B cell (primary cell): ENCODE measurements at regions of chr19 and their contacts with region 1.

Region 1: GRCh38 chr19:9435279-9436268 is at the start of gene ZNF266:
- DNase-seq: peak; percentile 95
- ATAC-seq: peak; percentile 93
- H3K4me3 ChIP-seq: peak within 1 kb of the TSS; percentile 64 to 91 (median 80)
- H3K4me3 Mint-ChIP-seq: peak within 1 kb of the TSS; percentile 95
- H3K27ac ChIP-seq: peak within 1 kb of the TSS; percentile 92 to 93
- H3K27ac Mint-ChIP-seq: peak within 1 kb of the TSS; percentile 98
- H3K4me1 ChIP-seq: peaks cover 16 to 26% of the 10 kb centered on the region in 2 donors
- H3K4me1 Mint-ChIP-seq: peaks cover 35% of the 10 kb centered on the region
- H3K27me3 ChIP-seq: no peaks in the 10 kb centered on the region
- H3K27me3 Mint-ChIP-seq: no peaks in the 10 kb centered on the region
- CTCF ChIP-seq: peak; percentile 77
- total RNA-seq, gene ZNF266: 76.0 and 81.4 TPM in 2 replicates

Region 2: GRCh38 chr19:9205501-9206113 is 230.0 kb before region 1 on chr19:
- CTCF ChIA-PET with region 1: interaction called, 8 read pairs
- POLR2A ChIA-PET with region 1: no interaction called
- intact Hi-C with region 1: loop called (anchors 10 kb)
- DNase-seq: peak; percentile 73
- ATAC-seq: peak; percentile 57
- H3K4me3 ChIP-seq: peak overlapping the region in 4 of 5 experiments; percentile 21 to 42 (median 33)
- H3K4me3 Mint-ChIP-seq: peak overlapping the region; percentile 78
- H3K27ac ChIP-seq: no peak overlapping the region
- H3K27ac Mint-ChIP-seq: no peak overlapping the region
- H3K4me1 ChIP-seq: peaks cover 0 to 4% of the 10 kb centered on the region in 2 donors
- H3K4me1 Mint-ChIP-seq: peaks cover 6% of the 10 kb centered on the region
- H3K27me3 ChIP-seq: no peaks in the 10 kb centered on the region
- H3K27me3 Mint-ChIP-seq: peaks cover 4% of the 10 kb centered on the region
- CTCF ChIP-seq: peak; percentile 97

Region 3: DNA sequence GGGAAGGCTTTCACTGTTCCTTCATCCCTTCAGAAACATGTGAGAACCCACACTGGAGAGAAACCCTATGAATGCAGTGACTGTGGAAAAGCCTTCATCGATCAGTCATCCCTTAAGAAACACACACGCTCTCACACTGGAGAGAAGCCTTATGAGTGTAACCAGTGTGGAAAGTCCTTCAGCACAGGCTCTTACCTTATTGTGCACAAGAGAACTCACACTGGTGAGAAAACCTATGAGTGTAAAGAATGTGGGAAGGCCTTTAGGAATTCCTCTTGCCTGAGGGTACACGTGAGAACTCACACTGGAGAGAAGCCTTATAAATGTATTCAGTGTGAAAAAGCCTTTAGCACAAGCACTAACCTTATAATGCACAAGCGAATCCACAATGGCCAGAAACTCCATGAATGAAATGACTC is 54.2 kb before region 1 on chr19:
- CTCF ChIA-PET with region 1: no interaction called
- POLR2A ChIA-PET with region 1: no interaction called
- intact Hi-C with region 1: no loop called
- DNase-seq: no peak
- ATAC-seq: no peak
- H3K4me3 ChIP-seq: no peak overlapping the region
- H3K4me3 Mint-ChIP-seq: no peak overlapping the region
- H3K27ac ChIP-seq: no peak overlapping the region
- H3K27ac Mint-ChIP-seq: no peak overlapping the region
- H3K4me1 ChIP-seq: no peaks in the 10 kb centered on the region
- H3K4me1 Mint-ChIP-seq: no peaks in the 10 kb centered on the region
- H3K27me3 ChIP-seq: no peaks in the 10 kb centered on the region
- H3K27me3 Mint-ChIP-seq: no peaks in the 10 kb centered on the region
- CTCF ChIP-seq: no peak

Region 4: DNA sequence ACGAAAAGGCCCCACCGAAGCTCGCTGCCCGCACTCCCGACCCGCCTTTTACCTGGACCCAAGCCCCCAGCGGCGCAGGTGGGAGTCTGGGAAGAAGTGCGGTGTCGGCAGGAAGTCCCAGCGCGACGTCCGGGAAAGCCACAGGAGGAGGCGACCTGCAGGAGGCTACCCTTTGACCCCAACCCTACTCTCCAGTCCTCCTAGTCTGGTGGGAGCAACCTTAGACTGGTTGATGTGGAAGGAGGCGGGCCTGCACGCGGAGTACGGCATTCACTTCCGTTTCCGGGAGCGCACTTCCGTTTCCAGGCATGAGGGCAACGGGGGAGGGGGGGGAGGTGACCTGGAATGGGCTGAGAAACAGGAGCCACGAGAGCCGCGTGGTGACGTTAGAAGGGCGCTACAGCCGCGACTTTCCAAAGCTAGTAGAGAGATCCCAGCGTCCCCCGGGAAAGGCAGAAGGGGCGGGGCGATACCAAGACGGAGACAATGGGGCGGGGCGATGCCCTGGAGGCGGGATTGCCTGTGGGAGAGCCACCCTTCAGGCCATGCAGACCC is 28.7 kb before region 1 on chr19:
- CTCF ChIA-PET with region 1: no interaction called
- POLR2A ChIA-PET with region 1: no interaction called
- intact Hi-C with region 1: loop called (anchors 2 kb)
- DNase-seq: peak; percentile 61
- ATAC-seq: peak; percentile 72
- H3K4me3 ChIP-seq: peak overlapping the region; percentile 42 to 79 (median 70)
- H3K4me3 Mint-ChIP-seq: peak overlapping the region; percentile 86
- H3K27ac ChIP-seq: no peak overlapping the region
- H3K27ac Mint-ChIP-seq: peak overlapping the region; percentile 50
- H3K4me1 ChIP-seq: peaks cover 9 to 16% of the 10 kb centered on the region in 2 donors
- H3K4me1 Mint-ChIP-seq: peaks cover 12% of the 10 kb centered on the region
- H3K27me3 ChIP-seq: no peaks in the 10 kb centered on the region
- H3K27me3 Mint-ChIP-seq: no peaks in the 10 kb centered on the region
- CTCF ChIP-seq: no peak

Region 5: GRCh38 chr19:9538183-9539058 is 102.8 kb after region 1 on chr19 and contains the start of gene ZNF426:
- CTCF ChIA-PET with region 1: no interaction called
- POLR2A ChIA-PET with region 1: no interaction called
- intact Hi-C with region 1: loop called (anchors 2 kb)
- DNase-seq: peak; percentile 90
- ATAC-seq: peak; percentile 87
- H3K4me3 ChIP-seq: peak within 1 kb of the TSS; percentile 63 to 97 (median 77)
- H3K4me3 Mint-ChIP-seq: peak within 1 kb of the TSS; percentile 100
- H3K27ac ChIP-seq: peak within 1 kb of the TSS; percentile 80 to 88
- H3K27ac Mint-ChIP-seq: peak within 1 kb of the TSS; percentile 99
- H3K4me1 ChIP-seq: peaks cover 7 to 11% of the 10 kb centered on the region in 2 donors
- H3K4me1 Mint-ChIP-seq: peaks cover 25% of the 10 kb centered on the region
- H3K27me3 ChIP-seq: no peaks in the 10 kb centered on the region
- H3K27me3 Mint-ChIP-seq: no peaks in the 10 kb centered on the region
- CTCF ChIP-seq: no peak
- total RNA-seq, gene ZNF426: 22.1 and 22.3 TPM in 2 replicates